ENCODE measurements at regions of chr5 and their contacts with region 1.

Region 1: GRCh38 chr5:77015938-77016569 is 14.2 kb upstream of the AGGF1 start:
- DNase-seq: peak; percentile 23
- CTCF ChIP-seq: peak; percentile 36

Region 2: DNA sequence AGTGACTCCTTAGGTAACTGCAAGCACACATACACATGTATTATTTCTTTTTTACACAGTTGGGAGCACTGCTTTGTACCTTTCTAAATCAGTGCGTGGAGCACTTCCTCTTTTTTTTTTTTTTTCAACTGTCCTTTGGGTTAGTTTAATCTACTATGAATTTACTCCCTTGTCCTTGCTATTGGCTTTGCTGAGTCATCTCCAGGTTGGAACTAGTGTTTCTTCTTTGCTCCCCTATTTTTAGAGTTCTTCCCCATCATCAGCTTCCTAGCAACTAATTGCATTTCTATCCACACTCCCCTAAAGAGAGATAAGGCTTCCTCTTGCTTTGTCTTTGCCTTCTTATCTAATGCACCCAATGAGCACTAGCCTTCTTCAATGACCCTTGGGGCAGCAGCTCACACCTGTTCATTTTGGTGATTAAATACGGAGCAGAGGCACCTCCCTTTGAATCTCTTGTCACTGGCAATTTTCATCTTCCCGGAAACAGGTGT is 141.9 kb before region 1 on chr5:
- in situ Hi-C with region 1: loop called (anchors 5 kb)
- DNase-seq: peak; percentile 45
- CTCF ChIP-seq: no peak

Measured in GM13977 (cell line).